GM13976 (cell line): ENCODE measurements at regions of chr7 and their contacts with region 1.

Region 1: GRCh38 chr7:18345641-18346234 is 149.8 kb upstream of the HDAC9 start:
- DNase-seq: no peak
- CTCF ChIP-seq: peak; percentile 58

Region 2: GRCh38 chr7:17706734-17707133 is 639.0 kb before region 1 on chr7:
- in situ Hi-C with region 1: loop called (anchors 10 kb)
- DNase-seq: peak; percentile 37
- CTCF ChIP-seq: peak; percentile 55

Region 3: DNA sequence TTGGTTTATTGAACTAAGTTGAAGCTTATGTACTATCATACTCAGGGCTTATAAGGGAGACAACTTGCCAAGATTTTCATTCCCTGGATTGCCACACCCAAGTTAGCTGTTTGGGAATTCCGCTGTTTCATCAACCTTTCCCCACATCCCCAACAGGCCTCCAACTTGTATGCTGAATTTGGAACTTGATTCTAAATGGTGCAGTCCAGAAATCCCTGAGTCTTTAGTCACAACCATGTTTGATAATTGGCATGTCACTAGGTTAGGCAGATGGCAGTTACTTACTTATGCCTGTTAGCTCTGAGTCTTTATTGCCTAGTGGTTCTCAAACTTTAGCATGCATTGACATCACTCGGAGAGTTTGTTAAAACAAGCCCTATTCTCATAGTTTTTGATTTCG is 182.6 kb before region 1 on chr7:
- in situ Hi-C with region 1: no loop called
- DNase-seq: no peak
- CTCF ChIP-seq: no peak